CD8-positive, alpha-beta T cell (primary cell): ENCODE measurements at regions of chr1 and their contacts with region 1.

Region 1: GRCh38 chr1:235328357-235329138 is at the start of gene GGPS1:
- DNase-seq: peak; percentile 96 to 99 (median 99)
- ATAC-seq: peak; percentile 76
- H3K4me3 ChIP-seq: peak within 1 kb of the TSS; percentile 83 to 94
- H3K4me3 Mint-ChIP-seq: no peak within 1 kb of the TSS
- H3K27ac ChIP-seq: peak within 1 kb of the TSS; percentile 91 to 97
- H3K27ac Mint-ChIP-seq: no peak within 1 kb of the TSS
- H3K4me1 ChIP-seq: peaks cover 59% of the 10 kb centered on the region
- H3K4me1 Mint-ChIP-seq: peaks cover 55% of the 10 kb centered on the region
- H3K27me3 ChIP-seq: no peaks in the 10 kb centered on the region
- H3K27me3 Mint-ChIP-seq: no peaks in the 10 kb centered on the region
- CTCF ChIP-seq: no peak
- total RNA-seq, gene GGPS1: 18.2 to 21.3 TPM

Region 2: DNA sequence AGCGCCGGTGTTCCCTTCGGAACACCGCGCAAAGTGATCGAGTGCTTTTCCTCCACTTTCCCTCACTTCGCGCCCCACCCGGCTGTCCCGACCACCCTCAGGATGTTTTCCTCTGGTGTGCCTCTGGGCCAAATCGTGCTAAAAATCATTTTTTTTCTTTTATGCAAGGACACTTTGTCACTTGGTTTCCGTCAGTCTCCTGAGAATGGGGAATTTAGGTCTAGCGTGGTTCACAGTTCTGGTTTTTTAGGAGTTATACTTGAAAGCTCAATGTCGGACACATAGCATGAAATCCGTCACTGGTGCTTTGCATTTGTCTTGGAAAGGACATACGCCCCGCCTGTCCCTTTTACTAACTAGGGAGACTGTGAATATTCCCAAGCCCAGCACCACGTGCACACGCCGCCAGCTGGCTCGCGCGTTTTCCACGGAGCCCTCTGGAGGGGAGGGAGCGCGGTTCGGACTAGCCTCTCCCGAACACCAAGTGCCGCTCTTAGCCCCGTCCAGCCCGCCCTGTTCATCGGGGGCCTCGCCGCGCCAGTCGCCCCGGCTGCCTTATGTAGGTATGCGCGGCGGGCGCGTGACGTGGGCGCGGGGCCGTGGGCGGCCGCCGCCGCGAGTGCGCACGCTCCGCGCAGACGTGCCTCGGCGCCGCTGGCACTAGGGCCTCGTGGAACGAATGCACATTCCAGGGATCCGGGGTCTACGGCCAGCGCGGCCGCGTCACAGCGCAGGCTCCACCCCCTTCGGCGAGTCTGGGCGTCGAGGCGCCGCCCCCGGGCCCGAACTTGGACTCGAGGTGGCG is 718.0 kb before region 1 on chr1:
- CTCF ChIA-PET with region 1: no interaction called
- POLR2A ChIA-PET with region 1: no interaction called
- intact Hi-C with region 1: loop called (anchors 2 to 5 kb)
- DNase-seq: peak; percentile 78 to 98 (median 89)
- ATAC-seq: peak; percentile 42
- H3K4me3 ChIP-seq: peak overlapping the region; percentile 78 to 86
- H3K4me3 Mint-ChIP-seq: peak overlapping the region; percentile 92
- H3K27ac ChIP-seq: peak overlapping the region; percentile 97 to 99
- H3K27ac Mint-ChIP-seq: peak overlapping the region; percentile 98
- H3K4me1 ChIP-seq: peaks cover 46% of the 10 kb centered on the region
- H3K4me1 Mint-ChIP-seq: peaks cover 49% of the 10 kb centered on the region
- H3K27me3 ChIP-seq: no peaks in the 10 kb centered on the region
- H3K27me3 Mint-ChIP-seq: no peaks in the 10 kb centered on the region
- CTCF ChIP-seq: no peak

Region 3: GRCh38 chr1:235253219-235253962 is 75.2 kb before region 1 on chr1:
- CTCF ChIA-PET with region 1: interaction called, 6 read pairs
- POLR2A ChIA-PET with region 1: no interaction called
- intact Hi-C with region 1: loop called (anchors 1 to 2 kb)
- DNase-seq: peak; percentile 36 to 83 (median 66)
- ATAC-seq: peak; percentile 97
- H3K4me3 ChIP-seq: no peak overlapping the region
- H3K4me3 Mint-ChIP-seq: no peak overlapping the region
- H3K27ac ChIP-seq: no peak overlapping the region
- H3K27ac Mint-ChIP-seq: no peak overlapping the region
- H3K4me1 ChIP-seq: peaks cover 6% of the 10 kb centered on the region
- H3K4me1 Mint-ChIP-seq: peaks cover 33% of the 10 kb centered on the region
- H3K27me3 ChIP-seq: no peaks in the 10 kb centered on the region
- H3K27me3 Mint-ChIP-seq: no peaks in the 10 kb centered on the region
- CTCF ChIP-seq: peak; percentile 97

Region 4: GRCh38 chr1:235307158-235308124 is 21.1 kb before region 1 on chr1:
- CTCF ChIA-PET with region 1: no interaction called
- POLR2A ChIA-PET with region 1: no interaction called
- intact Hi-C with region 1: loop called in 1 of 2 experiments (anchors 2 kb)
- DNase-seq: no peak
- ATAC-seq: no peak
- H3K4me3 ChIP-seq: no peak overlapping the region
- H3K4me3 Mint-ChIP-seq: no peak overlapping the region
- H3K27ac ChIP-seq: peak overlapping the region in 1 of 2 experiments; percentile 43
- H3K27ac Mint-ChIP-seq: peak overlapping the region; percentile 27
- H3K4me1 ChIP-seq: peaks cover 53% of the 10 kb centered on the region
- H3K4me1 Mint-ChIP-seq: peaks cover 64% of the 10 kb centered on the region
- H3K27me3 ChIP-seq: no peaks in the 10 kb centered on the region
- H3K27me3 Mint-ChIP-seq: no peaks in the 10 kb centered on the region
- CTCF ChIP-seq: no peak

Region 5: DNA sequence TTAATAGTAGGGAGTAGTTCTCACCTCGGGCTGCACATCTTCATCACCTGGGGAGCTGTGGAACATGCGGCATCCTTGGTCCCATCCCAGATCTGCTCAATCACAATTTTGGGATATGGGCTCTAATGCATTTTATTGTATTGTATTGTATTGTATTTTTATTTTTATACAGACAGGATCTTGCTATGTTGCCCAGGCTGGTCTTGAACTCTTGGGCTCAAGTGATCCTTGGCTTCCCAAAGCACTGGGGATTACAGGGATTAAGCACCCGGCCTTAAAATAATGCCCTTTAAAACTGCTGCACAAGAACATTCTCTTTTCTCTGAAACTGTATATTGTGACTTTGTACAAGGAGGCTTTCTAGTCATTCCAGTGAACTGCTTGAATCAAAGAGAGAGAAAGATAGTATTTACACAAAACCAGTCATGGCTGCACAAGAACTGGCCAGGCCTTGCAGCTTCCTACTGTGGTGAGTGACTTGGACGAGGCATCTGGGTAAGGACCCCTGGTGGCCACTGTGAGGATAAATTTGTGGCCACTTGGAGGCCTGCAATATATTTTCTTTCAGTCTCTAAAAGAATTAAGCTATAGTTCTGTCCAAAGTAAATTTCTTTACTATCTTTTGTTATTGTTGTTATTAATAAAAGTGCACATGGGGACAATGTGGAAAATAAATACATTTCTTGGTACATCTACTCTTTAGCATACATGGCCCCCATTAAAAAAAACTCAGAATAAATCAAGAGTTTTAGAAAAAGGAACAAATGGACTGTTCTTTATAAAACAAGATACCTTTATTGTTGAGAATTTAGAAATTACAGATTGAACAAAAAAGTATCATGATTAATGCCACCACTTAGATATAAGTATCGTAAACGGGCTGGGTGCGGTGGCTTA is 86.7 kb after region 1 on chr1:
- CTCF ChIA-PET with region 1: interaction called, 7 read pairs
- POLR2A ChIA-PET with region 1: interaction called, 4 read pairs
- intact Hi-C with region 1: loop called (anchors 1 to 5 kb)
- DNase-seq: peak; percentile 24 to 75 (median 53)
- ATAC-seq: peak; percentile 69
- H3K4me3 ChIP-seq: no peak overlapping the region
- H3K4me3 Mint-ChIP-seq: no peak overlapping the region
- H3K27ac ChIP-seq: no peak overlapping the region
- H3K27ac Mint-ChIP-seq: no peak overlapping the region
- H3K4me1 ChIP-seq: no peaks in the 10 kb centered on the region
- H3K4me1 Mint-ChIP-seq: peaks cover 10% of the 10 kb centered on the region
- H3K27me3 ChIP-seq: no peaks in the 10 kb centered on the region
- H3K27me3 Mint-ChIP-seq: no peaks in the 10 kb centered on the region
- CTCF ChIP-seq: peak; percentile 77

Region 6: DNA sequence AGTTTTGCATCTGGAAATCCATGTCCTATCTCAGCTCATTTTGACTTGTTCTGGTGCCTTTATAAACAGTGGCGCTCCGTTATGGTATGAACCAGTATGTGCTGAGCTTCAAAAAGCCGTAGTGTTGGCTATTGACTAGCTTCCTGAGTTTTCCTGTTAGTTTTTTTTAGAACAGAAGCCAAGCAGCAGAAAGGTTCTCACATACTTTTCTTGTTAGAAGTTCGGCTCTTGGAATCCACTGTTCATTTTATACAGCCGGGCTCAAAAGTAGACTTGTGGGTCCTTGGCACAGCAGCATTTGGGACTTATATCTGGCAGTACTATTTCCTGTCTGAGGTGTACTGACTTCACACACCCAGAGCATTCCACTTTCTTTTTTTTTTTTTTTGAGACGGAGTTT is 102.4 kb after region 1 on chr1:
- CTCF ChIA-PET with region 1: no interaction called
- POLR2A ChIA-PET with region 1: no interaction called
- intact Hi-C with region 1: no loop called
- DNase-seq: no peak
- ATAC-seq: no peak
- H3K4me3 ChIP-seq: no peak overlapping the region
- H3K4me3 Mint-ChIP-seq: no peak overlapping the region
- H3K27ac ChIP-seq: no peak overlapping the region
- H3K27ac Mint-ChIP-seq: no peak overlapping the region
- H3K4me1 ChIP-seq: no peaks in the 10 kb centered on the region
- H3K4me1 Mint-ChIP-seq: peaks cover 2% of the 10 kb centered on the region
- H3K27me3 ChIP-seq: no peaks in the 10 kb centered on the region
- H3K27me3 Mint-ChIP-seq: no peaks in the 10 kb centered on the region
- CTCF ChIP-seq: no peak

Region 7: GRCh38 chr1:236281654-236282424 is 953.3 kb after region 1 on chr1 and contains the start of gene ERO1B:
- CTCF ChIA-PET with region 1: no interaction called
- POLR2A ChIA-PET with region 1: no interaction called
- intact Hi-C with region 1: loop called in 1 of 2 experiments (anchors 5 kb)
- DNase-seq: peak; percentile 96 to 99 (median 97)
- ATAC-seq: peak; percentile 93
- H3K4me3 ChIP-seq: peak within 1 kb of the TSS; percentile 75 to 90
- H3K4me3 Mint-ChIP-seq: peak within 1 kb of the TSS; percentile 97
- H3K27ac ChIP-seq: peak within 1 kb of the TSS; percentile 72 to 85
- H3K27ac Mint-ChIP-seq: peak within 1 kb of the TSS; percentile 92
- H3K4me1 ChIP-seq: peaks cover 28% of the 10 kb centered on the region
- H3K4me1 Mint-ChIP-seq: peaks cover 52% of the 10 kb centered on the region
- H3K27me3 ChIP-seq: no peaks in the 10 kb centered on the region
- H3K27me3 Mint-ChIP-seq: no peaks in the 10 kb centered on the region
- CTCF ChIP-seq: no peak
- total RNA-seq, gene ERO1B: 16.2 to 16.6 TPM